MCF 10A (cell line): ENCODE measurements at regions of chr2 and their contacts with region 1.

Region 1: GRCh38 chr2:191252699-191253098 is 7.5 kb downstream of the MYO1B start:
- DNase-seq: no peak
- H3K4me3 Mint-ChIP-seq: no peak overlapping the region
- H3K27ac Mint-ChIP-seq: no peak overlapping the region
- H3K4me1 Mint-ChIP-seq: peaks cover 60% of the 10 kb centered on the region
- H3K27me3 Mint-ChIP-seq: no peaks in the 10 kb centered on the region
- CTCF ChIP-seq: no peak

Region 2: DNA sequence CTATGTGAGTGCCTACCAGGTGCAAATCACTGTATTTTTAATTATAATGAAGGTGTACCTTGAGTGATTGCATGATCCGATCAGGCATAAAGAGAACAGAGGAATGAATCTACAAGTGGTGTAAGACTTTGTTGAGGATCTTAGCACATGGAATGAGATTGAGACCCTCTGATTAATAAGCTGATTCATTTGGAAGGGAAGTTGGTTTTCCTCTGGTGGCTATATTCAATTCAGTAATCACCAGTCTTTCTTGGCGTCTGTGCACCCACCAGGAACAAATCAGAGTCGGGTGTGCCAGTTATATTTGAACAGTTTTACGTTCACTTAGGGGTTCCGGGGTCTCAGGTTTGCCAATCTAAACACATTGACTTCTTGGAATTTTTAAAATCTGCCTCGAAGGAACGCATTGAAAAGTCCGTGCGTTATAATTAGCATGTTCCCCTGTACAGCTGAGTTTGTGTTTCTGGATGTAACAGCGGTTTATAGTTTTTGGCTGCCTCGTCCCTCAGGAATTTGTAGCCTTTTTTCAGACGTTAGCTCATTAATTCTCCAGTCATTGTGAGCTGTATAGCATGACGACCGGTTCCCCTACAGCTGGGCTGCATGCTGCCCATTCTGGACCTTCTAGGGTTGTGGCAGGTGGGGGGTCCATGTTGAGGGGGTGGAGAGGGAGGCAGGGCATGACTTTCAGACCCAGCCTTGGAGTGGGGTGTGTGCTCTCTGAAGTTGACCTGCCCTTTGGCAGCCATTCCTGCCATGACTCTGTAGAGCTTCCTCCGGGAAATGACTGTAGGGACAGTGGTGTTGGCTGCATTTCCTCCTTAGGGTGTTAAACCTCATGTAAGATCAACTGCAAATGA is 12.8 kb after region 1 on chr2:
- CTCF ChIA-PET with region 1: interaction called, 6 read pairs
- POLR2A ChIA-PET with region 1: interaction called, 16 read pairs
- intact Hi-C with region 1: no loop called
- DNase-seq: peak; percentile 13
- H3K4me3 Mint-ChIP-seq: no peak overlapping the region
- H3K27ac Mint-ChIP-seq: peak overlapping the region; percentile 77
- H3K4me1 Mint-ChIP-seq: peaks cover 42% of the 10 kb centered on the region
- H3K27me3 Mint-ChIP-seq: no peaks in the 10 kb centered on the region
- CTCF ChIP-seq: no peak

Region 3: GRCh38 chr2:191302459-191303139 is 49.9 kb after region 1 on chr2:
- CTCF ChIA-PET with region 1: no interaction called
- POLR2A ChIA-PET with region 1: no interaction called
- intact Hi-C with region 1: no loop called
- DNase-seq: peak; percentile 37
- H3K4me3 Mint-ChIP-seq: no peak overlapping the region
- H3K27ac Mint-ChIP-seq: no peak overlapping the region
- H3K4me1 Mint-ChIP-seq: peaks cover 31% of the 10 kb centered on the region
- H3K27me3 Mint-ChIP-seq: no peaks in the 10 kb centered on the region
- CTCF ChIP-seq: no peak